Ascending aorta (tissue), 2 donors: ENCODE measurements at regions of chr3 and their contacts with region 1.

Region 1: GRCh38 chr3:32296256-32297204 is 58.0 kb downstream of the CMTM8 start:
- DNase-seq: peak in 1 of 2 donors; percentile 76
- H3K4me3 ChIP-seq: no peak overlapping the region
- H3K27ac ChIP-seq: no peak overlapping the region
- H3K4me1 ChIP-seq: no peaks in the 10 kb centered on the region
- H3K27me3 ChIP-seq: no peaks in the 10 kb centered on the region
- CTCF ChIP-seq: peak; percentile 64 to 89 (median 79)

Region 2: DNA sequence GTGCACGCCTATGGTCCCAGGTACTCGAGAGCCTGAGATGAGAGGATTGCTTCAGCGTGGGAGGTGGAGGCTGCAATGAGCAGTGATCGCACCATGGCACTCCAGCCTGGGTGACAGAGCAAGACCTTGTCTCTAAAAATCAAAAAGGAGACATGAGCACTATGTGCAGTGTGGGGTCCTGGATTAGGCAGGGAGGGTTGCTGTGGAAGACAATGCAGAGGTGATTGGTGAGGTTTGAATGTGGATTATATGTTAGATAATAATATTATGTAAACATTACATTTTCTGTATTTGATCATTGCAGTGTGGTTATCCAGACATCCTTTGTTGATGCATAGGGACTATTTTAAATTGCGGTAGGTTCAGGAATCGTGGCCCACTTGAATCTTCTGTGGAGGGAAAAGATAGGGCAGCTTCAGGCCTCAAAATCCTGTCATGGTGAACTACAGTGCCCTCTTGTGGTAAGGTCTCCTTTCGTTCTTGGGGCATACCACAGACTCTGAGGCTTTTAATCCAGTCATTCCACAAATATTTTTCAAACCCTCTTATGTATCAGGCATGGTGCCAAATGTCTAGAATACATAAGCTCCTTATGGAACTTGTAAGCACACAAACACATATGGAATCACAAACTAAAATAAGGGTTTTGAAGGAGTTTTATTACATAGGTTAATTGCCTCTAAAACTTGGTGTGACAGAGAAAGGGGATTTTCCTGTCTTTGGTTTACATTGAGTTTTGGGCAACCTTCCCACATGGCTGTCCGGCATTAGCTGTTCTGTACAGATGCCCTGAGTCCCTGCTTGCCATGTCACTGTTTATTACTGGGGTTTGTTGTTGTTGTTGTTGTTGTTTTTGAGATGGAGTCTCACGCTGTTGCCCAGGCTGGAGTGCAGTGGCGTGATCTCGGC is 152.4 kb before region 1 on chr3:
- intact Hi-C with region 1: no loop called
- DNase-seq: peak in 1 of 2 donors; percentile 72
- H3K4me3 ChIP-seq: no peak overlapping the region
- H3K27ac ChIP-seq: no peak overlapping the region
- H3K4me1 ChIP-seq: no peaks in the 10 kb centered on the region
- H3K27me3 ChIP-seq: no peaks in the 10 kb centered on the region
- CTCF ChIP-seq: peak; percentile 68 to 80 (median 77)

Region 3: GRCh38 chr3:32391643-32392535 is 95.4 kb after region 1 on chr3 and contains the start of gene CMTM7:
- intact Hi-C with region 1: loop called (anchors 10 kb)
- DNase-seq: peak in 1 of 2 donors; percentile 87
- H3K4me3 ChIP-seq: peak within 1 kb of the TSS; percentile 87 to 89
- H3K27ac ChIP-seq: peak within 1 kb of the TSS; percentile 62 to 71
- H3K4me1 ChIP-seq: peaks cover 0 to 3% of the 10 kb centered on the region in 2 donors
- H3K27me3 ChIP-seq: no peaks in the 10 kb centered on the region
- CTCF ChIP-seq: no peak
- total RNA-seq, gene CMTM7: 21.9 TPM